BJ (cell line): ENCODE measurements at regions of chr1 and their contacts with region 1.

Region 1: DNA sequence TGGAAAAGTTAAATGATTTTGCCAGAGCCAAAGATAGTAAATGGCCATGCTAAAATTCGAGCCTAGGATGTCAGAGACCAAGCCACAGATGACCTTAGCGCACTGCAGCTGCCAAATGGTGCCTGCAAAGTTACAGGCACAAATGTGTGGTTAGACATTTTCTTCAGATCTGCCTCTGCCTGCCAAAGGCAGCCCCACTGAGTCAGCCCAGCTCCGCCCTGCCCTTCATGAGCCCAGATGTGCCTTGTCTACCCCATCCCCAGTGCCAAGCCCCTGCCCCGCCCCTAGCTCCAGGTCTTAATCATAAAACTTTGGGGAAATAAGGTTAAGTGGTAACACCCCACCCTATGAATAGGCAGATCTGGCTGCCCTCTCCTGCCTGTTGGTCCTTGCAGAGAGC is 105.9 kb downstream of the DTL start:
- DNase-seq: no peak
- H3K4me3 ChIP-seq: no peak overlapping the region
- H3K27me3 ChIP-seq: no peaks in the 10 kb centered on the region
- CTCF ChIP-seq: no peak

Region 2: GRCh38 chr1:212190169-212190568 is 48.8 kb after region 1 on chr1:
- CTCF ChIA-PET with region 1: no interaction called
- POLR2A ChIA-PET with region 1: no interaction called
- DNase-seq: no peak
- H3K4me3 ChIP-seq: no peak overlapping the region
- H3K27me3 ChIP-seq: no peaks in the 10 kb centered on the region
- CTCF ChIP-seq: no peak

Region 3: DNA sequence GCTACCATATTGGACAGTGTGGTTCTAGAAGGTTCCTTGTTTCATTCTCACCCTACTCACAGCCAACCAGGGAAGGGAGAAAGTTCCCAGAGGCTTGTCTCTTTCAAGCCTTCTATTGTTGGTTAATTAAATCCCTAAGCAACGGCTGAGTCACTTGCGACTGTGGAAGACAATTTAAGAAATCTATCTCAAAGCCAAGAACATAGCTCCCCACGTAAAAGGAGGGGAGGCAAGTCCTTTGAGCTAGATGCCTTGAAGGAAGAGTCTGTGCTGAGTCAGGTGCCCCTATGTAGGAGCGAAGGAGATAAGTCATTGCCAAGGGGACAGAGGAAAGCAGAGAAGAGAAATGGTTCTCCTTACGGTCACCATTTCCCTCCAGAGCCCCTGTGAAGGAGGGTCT is 64.4 kb after region 1 on chr1:
- CTCF ChIA-PET with region 1: no interaction called
- POLR2A ChIA-PET with region 1: no interaction called
- DNase-seq: no peak
- H3K4me3 ChIP-seq: no peak overlapping the region
- H3K27me3 ChIP-seq: 0 out of 2 replicates have a peak, but pooled peaks cover 2% of the 10 kb centered on the region
- CTCF ChIP-seq: no peak

Region 4: DNA sequence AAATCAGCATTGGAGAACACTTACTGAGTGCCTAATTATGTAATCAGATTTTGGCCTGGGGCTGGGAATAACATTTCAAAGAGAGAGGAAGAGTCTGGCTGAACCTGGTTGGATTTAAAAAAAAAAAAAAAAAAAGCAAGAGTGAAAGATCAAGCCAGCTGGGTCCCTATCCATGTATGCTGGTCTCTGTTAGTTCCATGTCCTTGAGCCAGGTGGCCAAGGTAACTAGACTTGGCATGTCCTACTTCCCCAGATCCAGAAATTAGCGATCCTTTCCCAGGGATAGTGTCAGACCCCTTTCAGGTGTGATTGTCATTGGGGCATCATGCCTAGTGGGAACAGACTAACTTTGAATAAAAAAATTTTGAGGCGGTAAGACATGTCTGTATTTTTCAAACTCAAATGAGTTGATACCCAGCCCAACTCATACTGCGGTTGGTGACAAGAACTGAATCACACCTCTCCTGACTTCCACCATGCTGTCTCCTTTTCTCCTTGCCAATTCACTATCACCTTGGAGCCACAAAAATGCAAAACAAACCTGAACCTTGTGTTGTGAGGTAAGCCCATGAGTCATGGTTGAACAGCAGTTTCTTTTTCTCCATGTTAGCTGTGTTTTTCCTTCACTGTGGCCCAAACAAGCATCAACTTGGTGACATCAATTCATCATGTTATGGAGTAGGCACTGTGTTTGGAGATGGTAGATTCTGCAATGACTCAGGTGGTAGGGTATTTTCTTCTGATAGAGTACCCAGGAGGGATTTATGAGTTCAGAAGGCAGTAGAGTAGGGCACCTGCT is 119.4 kb after region 1 on chr1:
- CTCF ChIA-PET with region 1: no interaction called
- POLR2A ChIA-PET with region 1: interaction called, 12 read pairs
- DNase-seq: no peak
- H3K4me3 ChIP-seq: no peak overlapping the region
- H3K27me3 ChIP-seq: no peaks in the 10 kb centered on the region
- CTCF ChIP-seq: no peak